Dendritic cell treated with granulocyte-macrophage colony-stimulating factor and Interleukin-4, amounts not matched to agents 40 ng/mL and 50 ng/mL, for 4 days (primary cell): ENCODE measurements at regions of chrX and their contacts with region 1.

Region 1: DNA sequence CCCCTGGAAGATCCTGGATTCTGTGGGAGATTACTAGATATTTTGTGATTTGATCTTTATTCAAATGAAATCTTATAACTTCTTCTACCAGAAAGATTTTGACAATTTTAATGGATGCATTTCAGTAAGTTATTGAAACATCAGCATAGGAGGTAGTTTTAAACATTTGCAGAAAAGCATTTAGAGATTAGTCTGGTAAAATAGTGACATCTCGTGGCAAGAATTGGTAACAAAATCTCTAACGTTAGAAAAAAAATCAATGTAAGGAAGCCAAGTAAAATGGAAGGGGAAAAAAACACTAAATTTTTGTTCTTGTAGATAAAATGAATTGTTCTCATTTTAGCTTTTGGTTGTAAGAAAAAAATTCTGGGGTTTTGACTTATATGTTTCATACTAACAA is 73.3 kb downstream of the TASL start:
- H3K4me3 Mint-ChIP-seq: no peak overlapping the region
- H3K27ac Mint-ChIP-seq: no peak overlapping the region
- H3K4me1 Mint-ChIP-seq: no peaks in the 10 kb centered on the region
- H3K27me3 Mint-ChIP-seq: no peaks in the 10 kb centered on the region

Region 2: DNA sequence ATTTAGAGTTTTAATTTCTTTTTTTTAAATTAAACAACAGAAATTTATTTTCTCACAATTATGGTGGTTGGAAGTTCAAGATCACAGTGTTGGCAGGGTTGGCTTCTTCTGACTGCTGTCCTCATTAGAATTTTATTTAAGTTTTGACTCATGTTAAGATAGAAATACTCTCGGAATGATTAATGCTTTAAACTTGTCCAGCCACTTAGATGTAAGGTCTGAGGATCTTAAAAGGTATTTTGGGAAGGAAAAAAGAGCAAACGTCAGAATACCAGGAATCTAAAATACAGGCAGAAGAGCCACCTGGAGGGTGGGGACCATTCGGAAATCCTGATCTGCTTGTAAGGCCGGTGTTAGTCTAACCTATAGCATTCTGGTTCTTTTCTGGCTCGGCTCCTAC is 712.0 kb before region 1 on chrX:
- intact Hi-C with region 1: no loop called
- H3K4me3 Mint-ChIP-seq: no peak overlapping the region
- H3K27ac Mint-ChIP-seq: no peak overlapping the region
- H3K4me1 Mint-ChIP-seq: no peaks in the 10 kb centered on the region
- H3K27me3 Mint-ChIP-seq: no peaks in the 10 kb centered on the region

Region 3: DNA sequence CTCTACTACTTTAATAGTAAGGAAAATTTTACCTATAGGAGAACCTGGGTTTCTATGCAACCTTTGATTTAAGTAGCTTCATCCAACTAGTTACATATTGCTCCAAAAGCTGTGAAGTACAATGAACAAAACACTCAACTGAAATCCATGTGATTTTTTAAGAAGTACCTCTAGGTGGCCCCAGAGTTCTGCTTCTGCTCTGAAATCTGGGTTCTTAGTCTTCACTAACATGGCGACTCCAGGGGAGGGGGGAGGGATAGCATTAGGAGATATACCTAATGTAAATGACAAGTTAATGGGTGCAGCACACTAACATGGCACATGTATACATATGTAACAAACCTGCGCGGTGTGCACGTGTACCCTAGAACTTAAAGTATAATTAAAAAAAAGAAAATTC is 362.3 kb before region 1 on chrX:
- intact Hi-C with region 1: loop called (anchors 5 kb)
- H3K4me3 Mint-ChIP-seq: no peak overlapping the region
- H3K27ac Mint-ChIP-seq: no peak overlapping the region
- H3K4me1 Mint-ChIP-seq: no peaks in the 10 kb centered on the region
- H3K27me3 Mint-ChIP-seq: no peaks in the 10 kb centered on the region

Region 4: DNA sequence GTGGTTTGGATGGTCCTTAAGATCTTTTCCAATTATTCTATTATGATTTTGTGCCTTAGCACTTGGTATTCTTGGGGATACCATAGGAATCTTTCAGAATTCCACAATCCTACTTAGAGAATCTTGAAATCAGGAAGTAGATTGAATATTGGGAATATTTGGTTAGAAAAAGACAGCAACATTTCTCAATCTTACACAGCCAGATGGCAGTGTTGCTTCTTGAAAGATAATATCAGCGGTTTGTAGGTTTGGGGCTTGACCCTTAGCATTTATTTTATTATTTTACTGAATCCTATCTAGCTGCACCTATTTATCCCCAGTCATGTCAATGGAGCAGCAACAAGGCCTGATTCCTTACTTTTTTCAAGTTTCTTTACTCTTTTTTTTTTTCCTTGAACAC is 228.8 kb before region 1 on chrX:
- intact Hi-C with region 1: loop called (anchors 5 kb)
- H3K4me3 Mint-ChIP-seq: no peak overlapping the region
- H3K27ac Mint-ChIP-seq: no peak overlapping the region
- H3K4me1 Mint-ChIP-seq: no peaks in the 10 kb centered on the region
- H3K27me3 Mint-ChIP-seq: no peaks in the 10 kb centered on the region

Region 5: DNA sequence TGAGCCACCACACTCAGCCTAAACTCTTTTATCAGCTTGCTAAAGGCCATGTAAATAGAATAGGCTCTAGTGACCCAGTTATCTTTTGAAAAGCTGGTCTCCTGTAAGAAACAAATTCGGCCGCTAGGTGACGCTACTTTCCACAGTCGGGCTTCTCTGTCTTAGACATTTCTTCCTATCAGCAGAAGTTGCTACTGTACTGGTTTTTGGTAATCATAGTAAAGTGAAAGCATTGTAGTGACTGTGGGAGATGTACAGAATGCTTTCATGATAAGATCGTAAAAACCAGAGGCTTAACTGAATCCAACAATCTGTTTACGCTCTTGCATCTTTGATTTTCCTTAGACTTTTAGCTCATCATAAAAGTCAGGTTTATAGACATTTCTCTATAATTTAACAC is 231.5 kb after region 1 on chrX:
- intact Hi-C with region 1: no loop called
- H3K4me3 Mint-ChIP-seq: no peak overlapping the region
- H3K27ac Mint-ChIP-seq: no peak overlapping the region
- H3K4me1 Mint-ChIP-seq: no peaks in the 10 kb centered on the region
- H3K27me3 Mint-ChIP-seq: no peaks in the 10 kb centered on the region